Pancreas (tissue), 10 donors: ENCODE measurements at regions of chr14 and their contacts with region 1.

Region 1: GRCh38 chr14:99982537-99983250 is 82.5 kb upstream of the EVL start:
- DNase-seq: peak in 1 of 6 donors; percentile 41
- ATAC-seq: peak; percentile 62 to 96 (median 91)
- H3K4me3 ChIP-seq: no peak overlapping the region
- H3K27ac ChIP-seq: no peak overlapping the region
- H3K4me1 ChIP-seq: peaks cover 7 to 17% (median 11%) of the 10 kb centered on the region in 3 donors
- H3K27me3 ChIP-seq: no peaks in the 10 kb centered on the region
- CTCF ChIP-seq: peak in 3 of 4 donors; percentile 68 to 77 (median 68)

Region 2: DNA sequence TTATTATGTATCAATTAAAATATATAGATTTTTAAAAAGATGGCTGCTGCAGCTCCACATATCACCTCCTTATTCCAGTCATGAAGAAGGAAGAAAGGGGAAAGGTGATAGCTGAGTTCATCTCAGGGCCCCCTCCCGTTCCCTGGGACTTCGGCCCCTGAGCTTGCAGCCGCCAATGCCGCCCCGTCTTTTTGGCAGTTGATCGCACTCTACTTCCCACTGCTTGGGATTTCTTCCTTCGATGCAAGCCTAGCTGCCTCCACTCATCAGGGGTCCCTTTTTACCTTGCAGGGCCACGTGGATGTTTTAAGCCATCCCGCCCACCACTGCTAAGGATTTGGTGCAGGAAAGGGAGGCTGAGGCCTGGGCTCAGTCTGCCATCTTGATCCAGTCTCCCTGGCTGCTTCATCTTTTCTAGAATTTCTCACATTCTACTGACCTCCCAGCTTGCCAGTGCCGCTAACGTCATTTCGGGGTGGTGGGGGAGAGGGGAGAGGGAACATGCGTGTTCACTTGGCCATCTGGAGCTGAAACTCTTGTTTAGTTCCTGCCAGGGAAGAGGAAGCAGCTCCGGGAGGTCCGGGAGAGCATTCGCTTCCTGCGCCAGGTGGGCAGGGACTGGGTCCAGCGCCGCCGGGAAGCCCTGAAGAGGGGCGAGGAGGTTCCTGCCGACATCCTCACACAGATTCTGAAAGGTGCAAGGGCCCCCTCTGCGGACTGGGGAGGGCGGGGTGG is 267.3 kb before region 1 on chr14:
- intact Hi-C with region 1: no loop called
- DNase-seq: no peak
- ATAC-seq: no peak
- H3K4me3 ChIP-seq: no peak overlapping the region
- H3K27ac ChIP-seq: no peak overlapping the region
- H3K4me1 ChIP-seq: no peaks in the 10 kb centered on the region
- H3K27me3 ChIP-seq: no peaks in the 10 kb centered on the region
- CTCF ChIP-seq: no peak

Region 3: DNA sequence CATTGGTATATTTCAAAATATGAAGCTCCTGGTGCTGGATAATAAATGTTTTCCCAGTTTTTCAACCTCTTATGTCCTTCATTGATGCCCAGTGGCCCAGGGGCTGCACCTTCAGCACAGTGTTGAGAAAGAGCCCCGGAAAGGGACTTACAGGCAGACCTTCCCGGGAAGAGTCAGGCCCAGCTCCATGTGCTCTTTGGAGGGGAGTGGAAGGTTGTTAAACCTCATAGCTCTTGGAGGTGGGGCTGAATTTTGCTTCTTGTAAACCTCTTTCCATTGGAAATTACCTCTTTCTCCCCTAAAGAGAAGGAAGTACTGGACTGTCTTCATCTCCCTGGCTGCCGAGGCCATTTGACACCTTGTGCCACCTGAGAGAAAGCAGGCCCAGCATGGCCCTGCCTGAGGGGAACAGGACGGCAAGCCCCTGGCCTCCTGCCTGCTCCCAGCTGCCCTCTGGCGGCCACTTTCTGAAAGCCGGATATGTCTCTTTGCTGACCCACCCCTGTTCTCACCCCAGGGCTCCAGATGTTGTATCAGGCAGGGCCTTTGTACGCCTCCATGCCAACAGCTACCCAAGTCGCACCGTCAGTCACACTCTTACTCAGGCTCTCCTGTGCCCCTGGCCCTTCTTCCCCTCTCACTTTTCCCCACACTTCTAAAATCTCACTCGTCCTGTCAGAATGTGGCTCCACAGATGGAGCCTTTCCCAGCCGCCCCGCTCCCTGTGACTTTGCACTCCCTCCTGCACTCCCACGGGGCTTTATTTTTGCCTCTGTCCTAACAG is 125.5 kb after region 1 on chr14:
- intact Hi-C with region 1: loop called in 2 of 3 experiments (anchors 5 to 10 kb)
- DNase-seq: peak; percentile 71 to 94 (median 85)
- ATAC-seq: peak; percentile 89 to 95 (median 92)
- H3K4me3 ChIP-seq: no peak overlapping the region
- H3K27ac ChIP-seq: no peak overlapping the region
- H3K4me1 ChIP-seq: peaks cover 0 to 9% (median 0%) of the 10 kb centered on the region in 3 donors
- H3K27me3 ChIP-seq: no peaks in the 10 kb centered on the region
- CTCF ChIP-seq: peak; percentile 71 to 79 (median 76)

Region 4: GRCh38 chr14:100192672-100193416 is 210.2 kb after region 1 on chr14:
- intact Hi-C with region 1: loop called in 1 of 3 experiments (anchors 5 kb)
- DNase-seq: peak; percentile 99 to 100 (median 100)
- ATAC-seq: peak; percentile 97 to 100 (median 99)
- H3K4me3 ChIP-seq: peak overlapping the region; percentile 10 to 49 (median 32)
- H3K27ac ChIP-seq: peak overlapping the region; percentile 80 to 91 (median 84)
- H3K4me1 ChIP-seq: peaks cover 0 to 6% (median 5%) of the 10 kb centered on the region in 3 donors
- H3K27me3 ChIP-seq: no peaks in the 10 kb centered on the region
- CTCF ChIP-seq: peak; percentile 89 to 97 (median 93)